Calu3 (cell line): ENCODE measurements at regions of chr10 and their contacts with region 1.

Region 1: GRCh38 chr10:92822060-92822634 is 26.2 kb upstream of the EXOC6 start:
- DNase-seq: peak; percentile 32
- H3K4me3 Mint-ChIP-seq: peak overlapping the region; percentile 40
- H3K27ac Mint-ChIP-seq: peak overlapping the region; percentile 98
- H3K4me1 Mint-ChIP-seq: peaks cover 46% of the 10 kb centered on the region
- H3K27me3 Mint-ChIP-seq: no peaks in the 10 kb centered on the region
- CTCF ChIP-seq: no peak

Region 2: GRCh38 chr10:92695679-92696605 is 126.2 kb before region 1 on chr10:
- CTCF ChIA-PET with region 1: interaction called, 3 read pairs
- intact Hi-C with region 1: loop called (anchors 2 kb)
- DNase-seq: no peak
- H3K4me3 Mint-ChIP-seq: peak overlapping the region; percentile 58
- H3K27ac Mint-ChIP-seq: peak overlapping the region; percentile 80
- H3K4me1 Mint-ChIP-seq: peaks cover 29% of the 10 kb centered on the region
- H3K27me3 Mint-ChIP-seq: no peaks in the 10 kb centered on the region
- CTCF ChIP-seq: no peak